ENCODE measurements at regions of chr15 and their contacts with region 1.

Region 1: GRCh38 chr15:64740311-64741170 is 34.8 kb downstream of the RBPMS2 start:
- DNase-seq: peak; percentile 84 to 92
- H3K4me3 ChIP-seq: peak overlapping the region; percentile 1 to 24
- H3K27ac ChIP-seq: peak overlapping the region; percentile 84 to 93
- H3K4me1 ChIP-seq: no peaks in the 10 kb centered on the region
- H3K27me3 ChIP-seq: no peaks in the 10 kb centered on the region
- CTCF ChIP-seq: peak; percentile 44 to 56 (median 48)
- POLR2A ChIP-seq: no peak

Region 2: DNA sequence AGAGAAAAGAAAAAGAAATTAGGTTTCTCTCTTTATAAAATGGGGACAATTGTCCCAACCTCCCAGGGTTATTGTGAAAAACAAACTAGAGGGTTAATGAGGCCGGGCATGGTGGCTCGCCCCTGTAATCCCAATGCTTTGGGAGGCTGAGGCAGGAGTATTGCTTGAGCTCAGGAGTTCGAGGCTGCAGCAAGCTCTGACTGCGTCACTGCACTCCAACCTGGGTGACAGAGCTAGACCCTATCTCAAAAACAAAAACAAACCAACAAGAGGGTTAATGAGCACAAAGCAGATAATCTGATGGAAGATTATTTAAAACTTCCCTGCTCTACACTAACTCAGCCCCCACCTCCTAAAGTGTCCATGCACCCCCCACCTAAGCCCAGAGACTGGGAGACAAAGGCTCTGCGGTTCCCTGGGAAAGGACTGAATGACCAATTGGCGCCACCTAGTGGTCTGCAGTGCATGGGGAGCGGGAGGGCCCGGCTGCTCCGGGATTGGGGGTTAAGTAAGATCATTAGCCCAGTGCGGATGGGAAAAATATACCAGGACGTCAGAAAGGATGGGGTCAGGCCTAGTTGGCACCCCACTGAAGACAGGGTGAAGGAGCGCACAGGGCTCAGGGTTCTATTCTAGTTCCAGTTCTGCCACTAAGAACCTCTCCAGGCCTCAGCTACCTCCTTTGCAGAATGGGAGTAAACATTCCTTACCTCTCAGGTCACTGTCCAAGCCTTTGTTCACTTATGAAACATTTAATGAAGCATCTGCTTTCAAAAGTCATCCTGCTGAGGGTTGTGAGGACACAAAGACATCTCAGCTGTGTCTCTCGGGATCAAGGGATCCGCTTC is 69.3 kb after region 1 on chr15:
- intact Hi-C with region 1: loop called (anchors 5 kb)
- DNase-seq: peak; percentile 85 to 89
- H3K4me3 ChIP-seq: no peak overlapping the region
- H3K27ac ChIP-seq: peak overlapping the region; percentile 82 to 90
- H3K4me1 ChIP-seq: peaks cover 0 to 10% of the 10 kb centered on the region in 2 donors
- H3K27me3 ChIP-seq: no peaks in the 10 kb centered on the region
- CTCF ChIP-seq: peak; percentile 95 to 97 (median 96)
- POLR2A ChIP-seq: no peak